Common myeloid progenitor, CD34-positive (primary cell): ENCODE measurements at regions of chr1 and their contacts with region 1.

Region 1: GRCh38 chr1:25997828-25998761 is at the start of gene PAFAH2:
- DNase-seq: peak; percentile 100
- H3K4me3 ChIP-seq: peak within 1 kb of the TSS; percentile 11 to 92 (median 72)
- H3K27ac ChIP-seq: peak within 1 kb of the TSS; percentile 71 to 92
- H3K4me1 ChIP-seq: peaks cover 0 to 27% (median 16%) of the 10 kb centered on the region in 4 experiments
- H3K27me3 ChIP-seq: no peaks in the 10 kb centered on the region

Region 2: DNA sequence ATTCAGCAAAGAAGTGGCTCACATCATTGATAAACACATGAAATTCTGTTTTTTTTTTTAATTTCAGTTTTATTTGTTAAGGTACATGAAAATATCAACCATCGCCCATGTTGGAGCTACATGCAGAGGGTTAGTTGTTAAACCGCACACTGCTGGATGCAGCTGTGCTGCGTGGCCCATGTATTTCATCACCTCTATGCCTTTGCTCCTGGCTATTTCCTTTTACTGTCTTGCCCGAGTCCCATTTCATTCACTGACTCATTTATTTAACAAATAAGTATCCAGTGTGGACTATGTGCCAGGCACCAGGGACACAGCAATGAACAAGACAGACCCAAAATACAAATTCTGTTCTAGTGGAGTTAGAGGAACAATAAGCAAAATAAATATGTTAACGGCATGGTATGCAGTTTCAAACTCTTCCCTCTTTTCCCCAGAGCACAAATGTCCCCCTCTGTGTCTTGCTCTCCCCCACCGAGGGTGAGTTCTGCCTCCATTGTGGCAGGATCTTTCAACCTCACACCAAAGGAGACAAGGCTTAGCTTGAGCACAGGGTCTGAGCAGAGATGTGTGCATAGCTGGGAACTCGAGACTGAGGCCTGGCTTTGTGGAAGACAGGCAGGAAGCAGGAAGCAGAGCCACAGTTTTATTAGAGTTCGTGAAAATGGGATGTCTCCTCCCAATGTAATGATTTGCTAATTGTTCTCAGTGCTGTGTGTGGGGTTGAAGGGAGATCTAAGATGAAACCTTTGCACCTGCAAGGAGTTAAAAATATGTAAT is 336.9 kb before region 1 on chr1:
- CTCF ChIA-PET with region 1: no interaction called
- POLR2A ChIA-PET with region 1: no interaction called
- DNase-seq: no peak
- H3K4me3 ChIP-seq: no peak overlapping the region
- H3K27ac ChIP-seq: no peak overlapping the region
- H3K4me1 ChIP-seq: peaks cover 0 to 12% (median 11%) of the 10 kb centered on the region in 4 experiments
- H3K27me3 ChIP-seq: no peaks in the 10 kb centered on the region

Region 3: DNA sequence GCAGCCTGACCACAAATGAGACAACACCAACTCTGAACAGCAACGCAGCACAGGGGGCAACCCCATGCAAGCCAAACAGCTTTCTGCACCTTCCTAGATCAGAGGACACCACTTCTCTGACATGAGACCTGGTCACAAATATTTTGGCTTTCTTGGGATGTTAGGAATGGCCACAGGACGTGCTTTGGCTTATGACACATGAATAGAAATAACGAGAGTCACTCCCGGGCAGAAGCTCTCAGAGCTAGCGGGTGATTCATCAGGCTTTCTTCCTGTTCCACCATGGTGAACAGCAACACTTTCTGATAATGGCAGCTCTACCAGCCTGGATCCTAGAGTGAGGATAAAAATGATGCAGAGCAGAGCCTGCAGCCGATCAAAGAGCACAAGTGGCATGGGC is 39.6 kb before region 1 on chr1:
- CTCF ChIA-PET with region 1: interaction called, 10 read pairs
- POLR2A ChIA-PET with region 1: no interaction called
- DNase-seq: no peak
- H3K4me3 ChIP-seq: no peak overlapping the region
- H3K27ac ChIP-seq: no peak overlapping the region
- H3K4me1 ChIP-seq: peaks cover 0 to 4% (median 0%) of the 10 kb centered on the region in 4 experiments
- H3K27me3 ChIP-seq: no peaks in the 10 kb centered on the region

Region 4: DNA sequence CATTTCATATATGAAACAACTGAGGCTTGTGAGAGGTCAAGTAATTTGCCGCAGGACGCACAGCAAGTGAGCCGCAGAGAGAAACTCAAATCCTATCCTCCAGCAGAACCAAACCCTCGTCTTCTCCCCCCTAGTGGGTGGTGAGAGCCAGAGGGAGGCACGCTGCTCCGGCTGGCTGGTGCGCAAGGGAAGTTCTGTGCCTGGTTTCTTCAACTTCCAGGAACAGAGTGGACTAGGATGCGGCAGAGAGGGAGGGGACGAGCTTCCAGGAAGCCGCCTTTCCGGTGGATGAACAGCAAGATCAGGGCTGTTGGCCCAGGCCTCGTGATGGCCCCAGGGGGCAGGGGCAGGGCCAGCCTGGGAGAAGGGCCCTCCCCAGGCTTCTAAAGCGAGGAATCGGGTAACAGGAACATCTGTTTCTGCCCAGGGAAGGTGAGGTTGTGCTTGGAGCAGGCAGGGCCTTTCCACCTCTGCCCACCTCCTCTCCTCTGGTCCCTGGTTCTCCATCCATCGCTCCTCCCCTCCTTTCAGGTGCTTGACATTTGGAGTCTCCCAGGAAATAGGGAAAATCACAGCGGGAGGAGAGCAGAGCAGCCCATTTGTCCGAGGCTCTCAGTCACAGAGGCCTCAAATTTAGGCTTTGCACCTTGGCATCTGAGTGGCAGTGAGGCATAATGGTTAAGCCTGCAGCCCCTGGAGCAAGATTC is 96.7 kb after region 1 on chr1:
- CTCF ChIA-PET with region 1: no interaction called
- POLR2A ChIA-PET with region 1: no interaction called
- DNase-seq: no peak
- H3K4me3 ChIP-seq: no peak overlapping the region
- H3K27ac ChIP-seq: peak overlapping the region in 1 of 2 experiments; percentile 7
- H3K4me1 ChIP-seq: no peaks in the 10 kb centered on the region
- H3K27me3 ChIP-seq: peaks cover 0 to 25% (median 12%) of the 10 kb centered on the region in 5 experiments